WTC11 (cell line): ENCODE measurements at regions of chr6 and their contacts with region 1.

Region 1: DNA sequence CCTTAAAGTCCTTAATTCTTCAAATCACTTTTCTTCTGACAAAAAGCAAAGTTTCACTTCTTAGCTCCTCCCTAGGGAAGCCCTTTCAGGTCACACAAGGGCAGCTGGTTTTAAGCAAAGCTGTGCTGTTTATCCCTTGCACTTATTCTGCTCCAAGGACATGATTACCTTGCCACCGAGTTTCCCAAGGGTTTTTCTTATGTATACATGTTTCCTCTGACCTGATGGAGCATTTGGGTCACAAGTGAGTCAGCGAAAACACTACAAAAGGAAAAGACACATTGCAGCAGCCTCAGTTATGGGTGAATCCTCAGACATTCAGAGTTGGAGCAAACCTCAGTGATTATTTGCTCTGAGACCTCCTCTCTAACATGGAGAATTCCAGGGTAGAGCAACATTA is 26.6 kb upstream of the ILRUN start:
- DNase-seq: no peak
- ATAC-seq: peak; percentile 36; the same call in 1 of the 2 replicates
- H3K4me3 Mint-ChIP-seq: no peak overlapping the region
- H3K27ac Mint-ChIP-seq: peak overlapping the region; percentile 89
- H3K4me1 Mint-ChIP-seq: peaks cover 27% of the 10 kb centered on the region
- H3K27me3 Mint-ChIP-seq: no peaks in the 10 kb centered on the region; the same call in 1 of the 2 replicates
- CTCF ChIP-seq: no peak

Region 2: GRCh38 chr6:34425498-34426410 is 297.4 kb before region 1 on chr6 and contains the start of gene RPS10:
- CTCF ChIA-PET with region 1: no interaction called
- POLR2A ChIA-PET with region 1: interaction called, 10 read pairs
- DNase-seq: peak; percentile 91
- ATAC-seq: peak; percentile 91
- H3K4me3 Mint-ChIP-seq: peak within 1 kb of the TSS; percentile 97
- H3K27ac Mint-ChIP-seq: peak within 1 kb of the TSS; percentile 99
- H3K4me1 Mint-ChIP-seq: peaks cover 29% of the 10 kb centered on the region
- H3K27me3 Mint-ChIP-seq: 0 out of 2 replicates have a peak, but pooled peaks cover 2% of the 10 kb centered on the region
- CTCF ChIP-seq: no peak
- total RNA-seq, gene RPS10: 2,184 to 2,437 TPM (median 2,411 TPM) in 3 replicates

Region 3: GRCh38 chr6:34736823-34737222 is 13.6 kb after region 1 on chr6:
- CTCF ChIA-PET with region 1: no interaction called
- POLR2A ChIA-PET with region 1: no interaction called
- DNase-seq: no peak
- ATAC-seq: 0 out of 2 replicates have a peak, but pooled peaks have one; percentile 28
- H3K4me3 Mint-ChIP-seq: no peak overlapping the region
- H3K27ac Mint-ChIP-seq: peak overlapping the region; percentile 12; the same call in 1 of the 2 replicates
- H3K4me1 Mint-ChIP-seq: peaks cover 4% of the 10 kb centered on the region
- H3K27me3 Mint-ChIP-seq: no peaks in the 10 kb centered on the region
- CTCF ChIP-seq: no peak